Esophagus squamous epithelium (tissue), 5 donors: ENCODE measurements at regions of chr11 and their contacts with region 1.

Region 1: DNA sequence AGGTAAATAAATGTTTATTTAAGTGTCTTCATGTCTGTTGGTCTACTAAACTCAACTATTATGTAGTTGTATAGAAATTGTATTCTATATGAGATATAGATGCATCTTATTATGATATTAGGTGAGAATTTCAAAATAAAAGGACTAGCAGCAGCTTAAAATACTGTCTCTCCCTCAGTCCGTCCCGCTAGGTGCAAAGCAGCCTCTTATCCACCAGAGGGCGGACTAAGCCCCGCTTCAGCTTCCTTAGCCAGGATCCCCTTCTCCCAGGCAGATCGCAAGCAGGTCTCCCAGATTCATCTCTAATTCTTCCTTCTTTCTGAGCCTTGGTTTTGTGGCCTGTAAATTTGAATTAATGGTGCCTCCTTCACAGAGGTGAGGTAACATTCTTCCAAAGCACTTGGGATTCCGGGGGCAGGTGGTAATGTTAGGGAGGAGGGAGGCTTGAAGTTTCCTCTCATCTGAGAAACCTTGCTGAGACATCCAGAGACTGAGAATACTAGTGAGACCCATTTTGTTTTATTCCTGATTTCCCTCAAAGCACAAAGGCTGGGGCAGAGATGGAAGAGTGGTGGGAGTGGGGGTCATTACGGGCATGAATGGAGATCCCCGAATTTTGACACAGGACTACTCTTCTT is 13.5 kb upstream of the INSC start:
- DNase-seq: no peak
- H3K4me3 ChIP-seq: no peak overlapping the region
- H3K27ac ChIP-seq: no peak overlapping the region
- H3K4me1 ChIP-seq: no peaks in the 10 kb centered on the region
- H3K27me3 ChIP-seq: peaks cover 0 to 8% (median 0%) of the 10 kb centered on the region in 4 donors
- CTCF ChIP-seq: peak; percentile 76 to 94 (median 82)
- POLR2A ChIP-seq: no peak

Region 2: GRCh38 chr11:15144347-15144746 is 43.2 kb after region 1 on chr11:
- intact Hi-C with region 1: no loop called
- DNase-seq: no peak
- H3K4me3 ChIP-seq: no peak overlapping the region
- H3K27ac ChIP-seq: no peak overlapping the region
- H3K4me1 ChIP-seq: no peaks in the 10 kb centered on the region
- H3K27me3 ChIP-seq: no peaks in the 10 kb centered on the region
- CTCF ChIP-seq: no peak
- POLR2A ChIP-seq: no peak

Region 3: DNA sequence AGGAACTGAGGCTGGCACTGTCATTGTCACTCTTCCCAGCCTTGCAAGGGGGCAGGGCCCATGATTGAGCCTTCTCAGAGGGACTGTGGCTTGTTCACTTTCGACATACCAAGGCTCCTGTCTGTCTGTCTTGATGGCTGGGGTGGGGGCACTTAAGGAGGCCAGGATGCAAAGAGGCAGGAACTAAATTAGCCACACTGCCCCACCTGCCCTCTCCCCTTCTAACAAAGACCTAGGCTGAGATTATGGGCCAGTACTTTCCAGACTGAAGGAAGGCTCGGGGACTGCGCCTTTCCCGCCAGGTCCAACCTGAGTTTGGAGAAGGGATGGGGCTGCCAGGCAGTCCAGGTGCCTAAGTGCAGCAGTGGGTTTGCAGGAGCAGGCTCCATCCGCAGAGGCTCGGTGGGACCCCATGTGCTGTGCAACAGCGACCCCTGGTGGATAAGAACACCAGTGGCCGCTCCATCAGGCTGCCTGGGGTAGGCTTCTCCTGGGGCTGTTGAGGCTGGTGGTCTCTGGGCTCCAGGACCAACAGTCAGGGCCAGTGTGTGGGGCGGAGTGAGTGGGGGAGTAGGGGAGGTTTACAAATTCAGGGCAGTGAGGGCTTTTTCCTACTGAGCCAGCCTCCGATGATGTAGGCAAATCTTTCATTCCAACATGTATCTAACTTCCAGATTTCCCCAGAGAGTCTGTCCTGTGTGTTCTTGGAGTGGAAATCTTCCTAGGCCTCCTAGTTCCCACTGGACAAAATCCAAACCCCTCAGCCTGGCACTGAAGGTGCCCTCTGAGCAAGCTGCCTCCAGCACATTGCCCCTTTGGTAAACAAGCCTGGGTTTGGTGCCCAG is 107.4 kb after region 1 on chr11:
- intact Hi-C with region 1: loop called (anchors 2 kb)
- DNase-seq: peak; percentile 19
- H3K4me3 ChIP-seq: no peak overlapping the region
- H3K27ac ChIP-seq: no peak overlapping the region
- H3K4me1 ChIP-seq: peaks cover 0 to 7% (median 0%) of the 10 kb centered on the region in 3 donors
- H3K27me3 ChIP-seq: peaks cover 0 to 4% (median 0%) of the 10 kb centered on the region in 4 donors
- CTCF ChIP-seq: peak; percentile 75 to 89 (median 82)
- POLR2A ChIP-seq: no peak

Region 4: DNA sequence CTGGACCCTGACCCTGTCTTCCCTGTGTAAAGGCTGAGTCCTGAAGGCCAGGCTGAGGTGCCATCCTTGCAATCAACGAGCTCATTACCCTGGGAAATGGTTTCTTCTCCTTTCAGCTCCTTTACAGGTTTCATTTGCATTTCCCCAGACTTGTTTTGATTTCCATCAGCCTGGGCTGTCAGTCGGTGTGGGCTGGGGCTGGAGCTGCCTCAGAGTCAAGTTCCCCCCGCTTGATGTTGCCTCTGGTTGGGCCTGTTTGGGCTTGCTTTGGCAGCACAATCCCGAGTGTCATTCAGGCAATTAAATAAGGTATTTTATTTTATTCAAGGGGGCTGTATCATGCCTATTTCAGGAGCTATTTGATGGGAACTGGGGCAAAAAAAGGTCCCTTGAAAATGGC is 438.5 kb after region 1 on chr11:
- intact Hi-C with region 1: no loop called
- DNase-seq: no peak
- H3K4me3 ChIP-seq: no peak overlapping the region
- H3K27ac ChIP-seq: no peak overlapping the region
- H3K4me1 ChIP-seq: no peaks in the 10 kb centered on the region
- H3K27me3 ChIP-seq: no peaks in the 10 kb centered on the region
- CTCF ChIP-seq: no peak
- POLR2A ChIP-seq: no peak